ENCODE measurements at regions of chr3 and their contacts with region 1.

Region 1: DNA sequence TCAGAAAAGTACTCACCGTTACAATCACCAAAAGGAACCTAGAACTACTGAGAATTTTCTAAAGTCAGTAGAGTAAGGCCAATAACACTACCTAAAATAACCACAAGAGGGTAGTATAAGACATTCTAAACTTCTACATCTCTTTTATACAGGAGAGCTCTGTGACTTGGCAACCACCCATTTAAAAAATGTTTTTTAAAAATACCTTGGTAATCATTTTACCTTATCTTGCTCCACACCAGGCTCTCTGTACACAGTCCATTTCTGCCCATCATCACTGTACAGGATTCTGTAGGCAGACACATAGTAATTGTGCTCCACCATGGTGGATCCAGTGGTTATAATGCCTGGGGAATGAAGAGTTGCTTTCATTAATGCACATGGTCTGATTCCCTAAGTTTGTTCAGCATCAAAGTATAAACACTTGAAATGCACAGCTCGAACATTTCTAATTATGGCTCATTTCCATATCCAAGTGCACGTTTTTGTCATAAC is 54.5 kb downstream of the ST3GAL6 start:
- DNase-seq: peak; percentile 40 to 51 (median 45)
- ATAC-seq: peak; percentile 90
- H3K4me3 ChIP-seq: no peak overlapping the region
- H3K27ac ChIP-seq: no peak overlapping the region
- H3K4me1 ChIP-seq: peaks cover 0 to 4% of the 10 kb centered on the region in 2 experiments; a peak in 1 of 5 replicates
- H3K27me3 ChIP-seq: no peaks in the 10 kb centered on the region
- CTCF ChIP-seq: peak; percentile 16 to 59 (median 24); a peak in 4 of 6 replicates
- EP300 ChIP-seq: no peak
- POLR2A ChIP-seq: no peak
- RAD21 ChIP-seq: peak; percentile 74 to 78

Region 2: DNA sequence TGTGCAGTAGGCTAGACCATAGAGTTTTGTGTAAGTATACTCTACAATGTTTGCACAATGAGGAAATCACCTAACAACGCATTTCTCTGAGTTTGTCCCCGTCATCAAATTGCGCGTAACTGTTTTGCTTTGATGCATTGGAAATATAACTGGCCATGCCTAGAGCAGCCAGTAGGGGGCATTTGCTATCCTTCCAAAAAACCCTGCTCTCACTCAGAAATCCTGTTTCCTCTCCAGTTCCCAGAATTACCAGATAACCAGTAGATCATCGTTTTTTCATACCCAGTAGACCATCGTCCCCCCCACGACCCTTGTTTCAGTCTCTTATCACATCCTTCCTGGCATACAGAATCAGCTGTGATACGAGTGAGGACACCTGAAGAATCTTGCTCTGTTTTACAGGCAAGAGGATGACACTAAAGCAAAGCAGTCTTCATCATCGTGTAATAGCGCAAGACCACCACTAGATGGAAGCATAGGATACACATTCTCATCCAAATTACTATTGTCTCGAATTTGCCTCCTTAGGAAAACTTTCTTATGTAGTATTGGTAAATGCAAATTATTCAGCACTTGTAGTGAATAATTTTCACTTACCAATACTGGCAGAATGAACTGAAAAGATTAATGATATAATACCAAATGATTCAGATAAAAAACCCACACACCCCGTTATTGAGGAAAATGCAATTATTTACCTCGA is 778.1 kb before region 1 on chr3:
- CTCF ChIA-PET with region 1: interaction called, 13 read pairs
- POLR2A ChIA-PET with region 1: no interaction called
- in situ Hi-C with region 1: loop called (anchors 25 kb)
- intact Hi-C with region 1: loop called (anchors 2 kb)
- DNase-seq: peak; percentile 20 to 65 (median 47)
- ATAC-seq: peak; percentile 87
- H3K4me3 ChIP-seq: no peak overlapping the region
- H3K27ac ChIP-seq: no peak overlapping the region
- H3K4me1 ChIP-seq: no peaks in the 10 kb centered on the region
- H3K27me3 ChIP-seq: no peaks in the 10 kb centered on the region
- CTCF ChIP-seq: peak; percentile 55 to 72 (median 56)
- EP300 ChIP-seq: no peak
- POLR2A ChIP-seq: no peak
- RAD21 ChIP-seq: peak; percentile 59 to 73

Region 3: GRCh38 chr3:98602078-98602678 is 215.4 kb before region 1 on chr3:
- CTCF ChIA-PET with region 1: interaction called, 15 read pairs
- POLR2A ChIA-PET with region 1: no interaction called
- in situ Hi-C with region 1: loop called (anchors 5 kb)
- intact Hi-C with region 1: loop called (anchors 1 kb)
- DNase-seq: peak; percentile 22 to 57 (median 38)
- ATAC-seq: peak; percentile 90
- H3K4me3 ChIP-seq: no peak overlapping the region
- H3K27ac ChIP-seq: no peak overlapping the region
- H3K4me1 ChIP-seq: peaks cover 0 to 1% of the 10 kb centered on the region in 2 experiments; a peak in 2 of 5 replicates
- H3K27me3 ChIP-seq: no peaks in the 10 kb centered on the region
- CTCF ChIP-seq: peak; percentile 51 to 72 (median 59)
- EP300 ChIP-seq: no peak
- POLR2A ChIP-seq: no peak
- RAD21 ChIP-seq: peak; percentile 66 to 82

Region 4: DNA sequence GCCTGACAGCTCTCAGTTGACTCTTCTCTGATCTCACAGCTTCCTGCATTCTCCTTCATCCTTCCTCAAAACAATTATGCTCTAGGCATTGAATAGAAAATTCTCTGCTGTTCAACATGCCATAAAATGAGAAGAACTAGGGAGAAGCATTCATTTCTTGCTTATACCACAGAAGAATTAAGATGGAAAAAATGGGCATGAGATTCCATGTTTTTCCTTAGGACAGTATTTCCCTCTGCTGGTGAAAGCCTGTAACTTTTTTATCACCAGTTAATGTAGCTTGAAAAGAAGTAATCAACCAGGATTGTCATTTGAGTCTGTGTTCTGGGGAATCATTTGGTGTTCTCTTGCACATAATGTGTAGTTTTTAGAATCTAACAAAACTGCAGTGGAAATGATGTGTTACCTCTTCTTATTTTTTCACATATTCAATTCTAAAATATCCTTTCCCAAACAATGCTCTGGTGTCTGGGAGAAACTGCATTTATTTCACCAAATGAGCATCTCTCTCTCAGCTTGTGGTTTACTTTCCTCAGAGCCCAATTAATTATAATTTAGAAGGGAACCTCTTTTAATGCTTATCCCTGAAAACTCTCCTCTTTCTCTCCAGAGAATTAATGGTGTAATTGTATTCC is 176.7 kb after region 1 on chr3:
- CTCF ChIA-PET with region 1: interaction called, 19 read pairs
- POLR2A ChIA-PET with region 1: interaction called, 3 read pairs
- in situ Hi-C with region 1: loop called (anchors 5 kb)
- intact Hi-C with region 1: loop called (anchors 2 kb)
- DNase-seq: peak in 2 of 4 experiments; percentile 7 to 23
- ATAC-seq: no peak
- H3K4me3 ChIP-seq: no peak overlapping the region
- H3K27ac ChIP-seq: no peak overlapping the region
- H3K4me1 ChIP-seq: no peaks in the 10 kb centered on the region; a peak in 1 of 5 replicates
- H3K27me3 ChIP-seq: no peaks in the 10 kb centered on the region
- CTCF ChIP-seq: peak; percentile 31 to 60 (median 38); a peak in 4 of 6 replicates
- EP300 ChIP-seq: no peak
- POLR2A ChIP-seq: no peak
- RAD21 ChIP-seq: peak; percentile 66 to 79

Region 5: DNA sequence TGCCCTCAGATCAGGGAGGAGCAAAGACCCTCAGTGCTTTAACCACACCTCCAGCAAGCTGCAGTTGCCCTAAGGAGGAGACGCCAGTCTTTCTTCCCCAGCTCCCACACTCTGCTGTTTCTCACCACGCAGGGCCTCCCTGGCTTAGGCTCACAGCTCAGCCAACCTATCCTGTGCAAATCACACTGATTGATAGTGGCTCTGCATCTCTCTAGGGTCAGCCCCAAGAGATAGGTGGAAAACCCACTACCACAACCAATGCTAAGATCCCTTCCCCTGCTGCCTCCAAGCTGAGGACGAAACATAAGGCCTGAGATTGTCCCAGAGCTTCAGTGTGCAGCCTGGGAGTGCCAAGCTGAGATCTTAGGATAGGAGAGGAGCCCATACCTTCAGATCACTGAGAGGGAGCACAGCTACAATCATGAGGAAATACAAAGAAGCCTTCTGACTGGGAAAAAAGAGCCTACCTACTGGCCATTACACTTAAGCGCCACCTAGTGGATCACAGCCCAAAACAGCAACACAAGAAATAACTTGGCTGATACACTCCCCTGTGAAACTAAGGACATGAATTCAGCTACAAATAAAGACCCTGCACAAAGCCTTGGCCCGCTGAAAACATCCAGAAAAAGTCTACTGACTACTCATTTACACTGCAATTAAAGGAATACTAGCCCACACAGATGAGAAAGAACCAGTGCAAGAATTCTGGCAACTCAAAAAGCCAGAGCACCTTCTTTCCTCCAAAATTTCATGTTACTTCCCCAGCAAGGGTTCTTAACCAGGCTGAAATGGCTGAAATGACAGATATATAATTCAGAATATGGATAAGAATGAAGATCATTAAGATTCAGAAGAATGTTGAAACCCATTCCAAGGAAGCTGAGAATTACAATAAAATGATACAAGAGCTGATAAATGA is 355.4 kb after region 1 on chr3:
- CTCF ChIA-PET with region 1: interaction called, 3 read pairs
- POLR2A ChIA-PET with region 1: no interaction called
- in situ Hi-C with region 1: loop called (anchors 25 kb)
- intact Hi-C with region 1: loop called (anchors 2 kb)
- DNase-seq: peak; percentile 4 to 37 (median 8)
- ATAC-seq: peak; percentile 62; the same call in 2 of the 3 replicates
- H3K4me3 ChIP-seq: no peak overlapping the region
- H3K27ac ChIP-seq: no peak overlapping the region
- H3K4me1 ChIP-seq: no peaks in the 10 kb centered on the region
- H3K27me3 ChIP-seq: no peaks in the 10 kb centered on the region
- CTCF ChIP-seq: peak; percentile 38 to 50 (median 47)
- EP300 ChIP-seq: no peak
- POLR2A ChIP-seq: no peak
- RAD21 ChIP-seq: peak; percentile 20 to 47; a peak in 3 of 4 replicates

Region 6: GRCh38 chr3:99753268-99753975 is 935.8 kb after region 1 on chr3:
- CTCF ChIA-PET with region 1: interaction called, 4 read pairs
- POLR2A ChIA-PET with region 1: interaction called, 3 read pairs
- in situ Hi-C with region 1: no loop called
- intact Hi-C with region 1: loop called (anchors 5 kb)
- DNase-seq: peak; percentile 5 to 44 (median 14)
- ATAC-seq: peak; percentile 80
- H3K4me3 ChIP-seq: no peak overlapping the region
- H3K27ac ChIP-seq: no peak overlapping the region
- H3K4me1 ChIP-seq: no peaks in the 10 kb centered on the region
- H3K27me3 ChIP-seq: no peaks in the 10 kb centered on the region
- CTCF ChIP-seq: peak; percentile 51 to 78 (median 63)
- EP300 ChIP-seq: no peak
- POLR2A ChIP-seq: no peak
- RAD21 ChIP-seq: peak; percentile 78 to 80

Measured in K562 (cell line).